Panc1 (cell line): ENCODE measurements at regions of chr7 and their contacts with region 1.

Region 1: DNA sequence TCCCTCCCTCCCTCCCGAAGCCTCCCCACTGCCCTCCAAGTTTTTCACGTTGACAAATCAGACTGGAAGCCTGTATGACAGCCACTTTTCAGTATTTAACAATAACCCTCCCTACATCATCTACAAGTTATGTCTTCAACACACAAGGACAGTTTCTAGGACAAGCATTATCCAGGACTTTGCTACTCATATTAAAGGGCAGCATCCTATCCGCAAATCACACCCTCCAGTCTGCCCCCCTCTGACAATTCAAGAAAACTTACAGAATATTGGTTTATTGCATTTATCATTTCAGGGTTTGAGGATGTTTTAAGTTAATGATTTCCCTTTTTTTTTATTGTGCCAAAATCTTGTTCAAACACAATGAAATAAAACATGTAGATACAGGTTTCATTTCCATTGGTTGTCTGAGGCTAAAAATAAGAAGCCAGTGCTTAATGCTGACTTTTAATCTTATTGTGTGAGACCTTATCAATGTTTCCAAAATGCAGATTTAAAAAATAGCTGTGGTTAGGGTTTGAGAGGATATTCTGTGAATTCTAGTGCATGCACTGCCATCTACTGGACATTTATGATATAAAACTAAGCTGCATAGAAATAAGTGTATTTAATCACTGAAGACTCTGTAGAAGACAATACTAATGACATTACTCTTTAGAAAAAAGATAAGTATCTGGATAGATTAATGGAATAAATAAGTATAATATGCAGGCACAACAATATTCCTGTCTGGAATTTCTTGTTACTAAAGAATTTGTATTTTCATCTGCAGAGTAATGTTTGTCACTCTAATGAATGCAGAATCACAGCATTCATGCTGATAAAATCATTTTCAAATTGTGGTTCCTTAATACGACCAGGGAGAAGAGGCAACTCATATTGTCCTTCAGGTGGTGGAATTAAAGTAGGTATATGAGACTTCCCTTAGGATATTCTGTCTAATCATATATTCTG is 64.1 kb downstream of the CAV1 start:
- DNase-seq: peak; percentile 48
- ATAC-seq: peak; percentile 63
- H3K4me3 ChIP-seq: no peak overlapping the region
- H3K27ac ChIP-seq: peak overlapping the region; percentile 89
- H3K4me1 ChIP-seq: peaks cover 36% of the 10 kb centered on the region
- H3K27me3 ChIP-seq: no peaks in the 10 kb centered on the region
- CTCF ChIP-seq: peak; percentile 63; the same call in 1 of the 2 replicates

Region 2: DNA sequence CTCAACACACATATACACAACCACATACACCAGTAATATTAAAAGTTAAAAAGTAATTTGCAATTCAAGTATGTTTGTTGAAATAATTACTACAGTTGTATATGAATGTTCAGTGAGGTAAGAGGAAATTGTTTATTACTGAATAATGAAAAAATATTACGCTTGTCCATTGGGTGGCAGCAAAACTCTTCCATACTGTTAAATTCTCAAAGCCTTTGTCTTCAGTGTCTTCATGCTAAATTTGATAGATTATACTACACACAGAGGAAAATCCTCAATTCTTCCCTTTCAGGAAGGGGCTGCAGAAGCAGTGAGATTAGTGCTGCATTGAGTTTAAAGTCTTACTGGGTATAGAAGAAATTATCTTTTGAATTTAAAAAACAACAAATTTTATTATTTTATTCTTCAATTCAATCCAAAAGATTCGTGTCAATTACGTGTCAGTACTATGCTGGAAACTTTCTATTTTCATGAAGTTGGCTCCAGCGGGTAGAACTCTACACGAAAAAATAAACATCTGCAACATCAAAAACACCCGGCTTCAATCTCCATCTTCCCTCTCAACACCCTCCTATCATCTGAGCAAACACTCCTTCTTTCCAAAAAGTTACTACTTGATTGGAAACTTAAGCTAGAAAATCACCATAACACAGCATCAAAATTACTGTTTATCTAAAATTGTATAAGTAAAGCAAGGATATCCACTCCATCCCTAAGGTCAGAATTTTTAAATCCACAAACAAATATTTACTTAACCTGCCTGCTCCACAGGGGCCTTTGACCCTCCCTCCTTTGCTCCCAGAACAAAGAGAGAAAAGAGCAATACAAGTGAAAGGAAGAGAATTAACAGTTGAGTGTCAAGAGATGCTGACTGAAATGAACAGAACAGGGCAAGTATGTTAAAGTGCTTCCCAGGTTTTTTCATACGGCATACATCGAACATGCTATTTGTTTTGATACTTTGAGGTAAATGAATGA is 415.6 kb before region 1 on chr7:
- CTCF ChIA-PET with region 1: interaction called, 3 read pairs
- POLR2A ChIA-PET with region 1: no interaction called
- in situ Hi-C with region 1: no loop called
- intact Hi-C with region 1: loop called (anchors 2 kb)
- DNase-seq: peak; percentile 80
- ATAC-seq: peak; percentile 68
- H3K4me3 ChIP-seq: no peak overlapping the region
- H3K27ac ChIP-seq: peak overlapping the region; percentile 73; the same call in 1 of the 2 replicates
- H3K4me1 ChIP-seq: peaks cover 15% of the 10 kb centered on the region
- H3K27me3 ChIP-seq: peaks cover 2% of the 10 kb centered on the region; the same call in 1 of the 2 replicates
- CTCF ChIP-seq: peak; percentile 60; the same call in 1 of the 2 replicates

Region 3: DNA sequence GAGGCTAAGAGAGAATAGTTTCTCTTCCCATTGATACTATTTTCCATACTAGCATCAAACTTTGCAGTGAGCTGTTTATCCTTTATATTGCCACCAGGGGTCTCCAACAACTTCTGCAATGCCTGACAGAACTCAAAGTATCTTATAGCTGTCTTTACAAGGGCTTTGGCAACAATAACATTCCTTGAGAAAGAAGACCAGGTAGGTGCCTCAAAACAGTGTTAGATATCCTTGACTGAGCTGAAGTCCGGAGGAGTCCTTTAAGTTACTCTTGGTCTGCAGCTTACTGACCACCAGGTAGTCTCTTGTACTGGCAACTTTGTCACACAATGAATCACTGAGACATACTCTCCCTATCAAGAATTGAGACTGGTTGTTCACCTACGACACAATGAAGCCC is 408.6 kb before region 1 on chr7:
- CTCF ChIA-PET with region 1: interaction called, 10 read pairs
- POLR2A ChIA-PET with region 1: no interaction called
- in situ Hi-C with region 1: no loop called
- intact Hi-C with region 1: no loop called
- DNase-seq: peak; percentile 73
- ATAC-seq: peak; percentile 90
- H3K4me3 ChIP-seq: no peak overlapping the region
- H3K27ac ChIP-seq: peak overlapping the region; percentile 67; the same call in 1 of the 2 replicates
- H3K4me1 ChIP-seq: peaks cover 3% of the 10 kb centered on the region; the same call in 1 of the 2 replicates
- H3K27me3 ChIP-seq: no peaks in the 10 kb centered on the region
- CTCF ChIP-seq: peak; percentile 79

Region 4: GRCh38 chr7:116354546-116355408 is 234.1 kb before region 1 on chr7:
- CTCF ChIA-PET with region 1: no interaction called
- POLR2A ChIA-PET with region 1: no interaction called
- in situ Hi-C with region 1: no loop called
- intact Hi-C with region 1: loop called (anchors 10 kb)
- DNase-seq: peak; percentile 98
- ATAC-seq: peak; percentile 92
- H3K4me3 ChIP-seq: peak overlapping the region; percentile 12 to 49
- H3K27ac ChIP-seq: peak overlapping the region; percentile 100
- H3K4me1 ChIP-seq: peaks cover 49% of the 10 kb centered on the region
- H3K27me3 ChIP-seq: no peaks in the 10 kb centered on the region
- CTCF ChIP-seq: no peak

Region 5: GRCh38 chr7:116571037-116571436 is 17.9 kb before region 1 on chr7:
- CTCF ChIA-PET with region 1: interaction called, 11 read pairs
- POLR2A ChIA-PET with region 1: no interaction called
- in situ Hi-C with region 1: no loop called
- intact Hi-C with region 1: no loop called
- DNase-seq: no peak
- ATAC-seq: no peak
- H3K4me3 ChIP-seq: no peak overlapping the region
- H3K27ac ChIP-seq: no peak overlapping the region
- H3K4me1 ChIP-seq: 0 out of 2 replicates have a peak, but pooled peaks cover 6% of the 10 kb centered on the region
- H3K27me3 ChIP-seq: no peaks in the 10 kb centered on the region
- CTCF ChIP-seq: no peak

Region 6: DNA sequence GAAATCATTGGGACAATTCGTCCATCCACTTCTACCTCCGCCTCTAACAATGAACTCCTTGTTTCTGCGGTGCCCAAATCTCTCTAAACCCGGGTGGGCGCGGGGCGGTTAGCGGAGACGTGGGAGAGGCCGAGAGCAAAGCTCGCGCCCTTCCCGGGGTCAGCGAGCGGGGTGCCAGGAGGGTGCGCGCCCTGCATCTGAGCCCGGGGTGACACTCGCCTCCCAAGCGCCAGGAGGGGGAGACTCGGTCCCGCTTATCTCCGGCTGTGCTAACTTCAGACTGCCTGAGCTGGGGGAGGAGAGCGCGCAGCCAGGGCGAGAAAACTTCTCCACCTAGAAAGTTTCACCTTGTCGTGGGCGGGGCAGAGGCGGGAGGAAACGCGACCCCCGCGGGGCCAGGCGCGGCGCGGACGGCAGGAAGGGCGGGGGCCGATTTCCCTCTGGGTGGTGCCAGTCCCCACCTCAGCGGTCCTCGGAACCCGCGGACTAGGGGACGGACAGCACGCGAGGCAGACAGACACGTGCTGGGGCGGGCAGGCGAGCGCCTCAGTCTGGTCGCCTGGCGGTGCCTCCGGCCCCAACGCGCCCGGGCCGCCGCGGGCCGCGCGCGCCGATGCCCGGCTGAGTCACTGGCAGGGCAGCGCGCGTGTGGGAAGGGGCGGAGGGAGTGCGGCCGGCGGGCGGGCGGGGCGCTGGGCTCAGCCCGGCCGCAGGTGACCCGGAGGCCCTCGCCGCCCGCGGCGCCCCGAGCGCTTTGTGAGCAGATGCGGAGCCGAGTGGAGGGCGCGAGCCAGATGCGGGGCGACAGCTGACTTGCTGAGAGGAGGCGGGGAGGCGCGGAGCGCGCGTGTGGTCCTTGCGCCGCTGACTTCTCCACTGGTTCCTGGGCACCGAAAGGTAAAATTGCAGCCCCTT is 83.0 kb after region 1 on chr7 and contains the start of gene MET:
- CTCF ChIA-PET with region 1: interaction called, 3 read pairs
- POLR2A ChIA-PET with region 1: no interaction called
- in situ Hi-C with region 1: no loop called
- intact Hi-C with region 1: loop called (anchors 5 kb)
- DNase-seq: peak; percentile 69
- ATAC-seq: peak; percentile 93
- H3K4me3 ChIP-seq: peak within 1 kb of the TSS; percentile 86 to 89
- H3K27ac ChIP-seq: peak within 1 kb of the TSS; percentile 94
- H3K4me1 ChIP-seq: peaks cover 33% of the 10 kb centered on the region
- H3K27me3 ChIP-seq: no peaks in the 10 kb centered on the region
- CTCF ChIP-seq: peak; percentile 86
- total RNA-seq, gene MET: 103 TPM

Region 7: DNA sequence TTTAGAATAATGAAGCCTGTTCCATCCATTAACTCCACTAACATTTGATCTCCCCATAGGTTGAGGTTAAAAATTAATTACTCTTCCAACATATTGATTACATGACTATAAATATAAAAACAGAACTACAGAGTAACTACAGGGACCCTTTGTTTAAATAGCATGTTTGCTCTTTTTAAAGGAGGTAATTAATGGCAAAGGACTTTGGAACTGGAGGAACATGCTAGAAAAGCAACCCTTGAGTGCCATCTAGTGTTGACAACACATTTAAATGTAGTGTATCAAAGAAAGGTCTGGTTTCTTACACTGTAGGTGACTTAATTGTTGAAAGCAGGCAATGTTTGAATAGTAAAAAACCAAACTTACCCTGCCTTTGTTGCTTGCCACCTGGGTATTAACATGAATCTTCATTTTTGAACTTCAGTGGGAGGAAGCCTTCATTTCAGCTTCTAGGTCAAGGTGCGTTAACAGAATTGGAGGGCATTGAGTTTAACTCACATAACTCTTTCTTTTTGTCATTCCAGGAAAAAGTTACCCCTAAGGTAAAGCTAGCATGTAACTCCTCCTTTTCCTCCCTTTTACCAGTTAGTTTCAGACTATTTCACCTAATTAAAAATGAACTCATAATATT is 220.8 kb after region 1 on chr7:
- CTCF ChIA-PET with region 1: interaction called, 9 read pairs
- POLR2A ChIA-PET with region 1: interaction called, 3 read pairs
- in situ Hi-C with region 1: no loop called
- intact Hi-C with region 1: loop called (anchors 1 kb)
- DNase-seq: peak; percentile 77
- ATAC-seq: peak; percentile 90
- H3K4me3 ChIP-seq: no peak overlapping the region
- H3K27ac ChIP-seq: peak overlapping the region; percentile 83
- H3K4me1 ChIP-seq: peaks cover 50% of the 10 kb centered on the region
- H3K27me3 ChIP-seq: no peaks in the 10 kb centered on the region
- CTCF ChIP-seq: peak; percentile 67; the same call in 1 of the 2 replicates